Activated CD4-positive, alpha-beta T cell treated with anti-CD3 and anti-CD28 coated beads, Interleukin-2, amount 10 ng/mL, durations not matched to agents 24 days and 14 days (primary cell): ENCODE measurements at regions of chr5 and their contacts with region 1.

Region 1: GRCh38 chr5:91311697-91312501 is 71.2 kb downstream of the ARRDC3 start:
- DNase-seq: peak; percentile 89
- H3K4me3 Mint-ChIP-seq: peak overlapping the region; percentile 59
- H3K27ac Mint-ChIP-seq: peak overlapping the region; percentile 80
- H3K4me1 Mint-ChIP-seq: peaks cover 37% of the 10 kb centered on the region
- H3K27me3 Mint-ChIP-seq: no peaks in the 10 kb centered on the region

Region 2: DNA sequence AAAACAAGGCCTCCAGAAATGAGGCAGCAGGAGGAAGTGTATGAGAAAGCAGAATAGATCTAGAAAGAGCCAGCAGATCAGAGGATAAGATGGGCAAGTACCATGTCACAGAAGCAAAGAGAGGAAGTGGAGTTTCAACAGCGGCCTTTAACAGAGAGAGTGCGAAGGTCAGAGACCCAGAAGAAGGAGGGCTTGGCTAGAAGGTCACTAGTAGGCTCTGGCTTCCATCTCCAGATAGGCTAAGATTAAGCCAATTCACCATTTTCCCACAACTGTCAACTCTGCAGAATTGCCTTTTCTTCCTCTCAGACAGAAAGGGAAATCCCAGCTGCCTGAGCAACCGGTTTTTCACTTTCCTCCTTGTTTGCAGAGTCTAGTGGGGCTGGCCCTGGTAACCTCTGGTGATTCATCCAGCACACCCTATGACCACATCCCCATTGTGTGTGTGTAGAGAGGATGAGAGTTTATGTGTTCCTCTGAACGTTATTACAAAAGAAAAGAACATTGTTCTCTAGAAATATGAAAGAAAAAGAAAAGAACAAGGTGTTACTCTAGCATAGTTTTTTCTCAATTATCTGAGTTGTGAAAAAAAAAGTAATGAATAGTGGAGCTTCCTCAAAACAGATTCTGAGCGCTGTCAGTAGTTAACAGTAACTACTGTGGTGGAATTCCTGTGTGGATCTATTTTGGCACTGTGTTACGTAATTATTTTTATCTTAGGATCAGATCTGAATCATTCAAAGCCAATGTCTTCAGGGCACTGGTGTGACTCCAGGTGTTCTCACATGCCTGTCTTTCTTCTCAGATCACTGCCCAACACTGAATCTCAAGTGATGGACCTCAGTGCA is 149.1 kb before region 1 on chr5:
- intact Hi-C with region 1: loop called (anchors 2 kb)
- DNase-seq: peak; percentile 90
- H3K4me3 Mint-ChIP-seq: peak overlapping the region; percentile 63
- H3K27ac Mint-ChIP-seq: peak overlapping the region; percentile 88
- H3K4me1 Mint-ChIP-seq: peaks cover 25% of the 10 kb centered on the region
- H3K27me3 Mint-ChIP-seq: peaks cover 3% of the 10 kb centered on the region

Region 3: GRCh38 chr5:91225848-91226686 is 85.8 kb before region 1 on chr5:
- intact Hi-C with region 1: loop called (anchors 5 kb)
- DNase-seq: peak; percentile 87
- H3K4me3 Mint-ChIP-seq: no peak overlapping the region
- H3K27ac Mint-ChIP-seq: no peak overlapping the region
- H3K4me1 Mint-ChIP-seq: peaks cover 3% of the 10 kb centered on the region
- H3K27me3 Mint-ChIP-seq: peaks cover 26% of the 10 kb centered on the region

Region 4: DNA sequence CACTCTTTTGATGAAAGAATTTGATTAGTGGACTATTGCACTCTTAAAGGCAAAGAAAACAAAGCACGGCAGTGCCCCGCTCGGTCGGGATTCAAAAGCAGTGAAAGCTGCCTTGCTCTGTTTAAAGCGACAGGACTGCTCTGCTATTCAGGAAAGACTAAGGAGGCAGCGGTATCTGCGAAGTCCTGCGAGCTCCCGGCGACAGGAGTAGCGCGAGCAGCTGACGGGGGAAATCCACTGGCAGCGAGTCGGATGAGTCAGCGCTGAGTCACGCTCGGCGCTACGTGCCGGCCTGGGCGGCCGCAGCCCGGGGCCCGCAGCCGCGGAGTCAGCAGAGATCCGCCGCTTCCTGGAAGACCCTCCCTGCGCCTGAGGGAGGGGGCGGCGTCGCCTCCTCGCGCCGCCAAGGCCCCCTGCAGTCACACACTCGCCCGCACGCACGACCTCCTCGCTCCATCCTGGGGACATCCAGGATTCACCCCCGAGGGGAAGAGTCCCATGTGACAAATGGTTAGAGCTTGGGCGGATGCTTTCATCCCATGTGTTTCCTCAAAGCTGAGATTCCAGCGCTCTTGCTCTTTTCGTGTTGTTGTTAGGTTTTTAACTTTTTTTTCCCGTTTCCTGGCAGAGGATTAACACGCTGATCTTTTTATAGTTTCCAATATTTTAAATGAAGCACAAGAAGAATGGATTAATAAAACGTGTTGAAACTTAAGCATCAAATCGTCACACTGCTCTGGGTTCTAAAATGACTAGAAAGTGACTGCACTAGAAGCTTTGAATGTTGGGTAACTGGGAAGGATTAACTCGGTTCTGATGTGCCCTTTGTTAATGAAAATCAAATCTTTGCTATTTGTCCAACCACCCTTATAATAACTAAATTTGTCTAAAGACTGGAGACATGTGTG is 31.3 kb before region 1 on chr5:
- intact Hi-C with region 1: loop called (anchors 1 kb)
- DNase-seq: peak; percentile 95
- H3K4me3 Mint-ChIP-seq: peak overlapping the region; percentile 85
- H3K27ac Mint-ChIP-seq: peak overlapping the region; percentile 92
- H3K4me1 Mint-ChIP-seq: peaks cover 28% of the 10 kb centered on the region
- H3K27me3 Mint-ChIP-seq: peaks cover 4% of the 10 kb centered on the region

Region 5: DNA sequence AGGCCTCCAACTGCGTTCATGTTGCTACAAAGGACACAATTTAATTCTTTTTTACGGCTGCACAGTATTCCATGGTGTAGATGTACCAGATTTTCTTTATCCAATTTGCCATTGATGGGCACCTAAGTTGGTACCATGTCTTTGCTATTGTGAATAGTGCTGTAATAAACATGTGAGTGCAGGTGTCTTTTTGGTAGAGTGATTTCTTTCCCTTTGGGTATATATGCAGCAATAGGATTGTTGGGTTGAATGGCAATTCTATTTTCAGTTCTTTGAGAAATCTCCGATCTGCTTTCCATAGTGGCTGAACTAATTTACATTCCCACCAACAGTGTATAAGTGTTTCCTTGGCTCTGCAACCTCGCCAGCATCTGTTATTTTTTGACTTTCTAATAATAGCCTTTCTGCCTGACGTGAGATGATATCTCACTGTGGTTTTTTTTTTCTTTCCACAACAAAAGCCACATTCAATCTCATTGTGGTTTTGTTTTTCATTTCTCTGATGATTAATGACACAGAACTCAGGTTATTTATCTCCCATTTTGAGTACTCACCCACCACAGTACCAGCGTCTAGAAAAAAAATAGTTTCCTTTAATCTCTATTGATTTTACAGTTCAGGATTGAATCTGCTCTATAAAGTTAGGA is 49.3 kb after region 1 on chr5:
- intact Hi-C with region 1: loop called (anchors 1 kb)
- DNase-seq: no peak
- H3K4me3 Mint-ChIP-seq: no peak overlapping the region
- H3K27ac Mint-ChIP-seq: peak overlapping the region; percentile 74
- H3K4me1 Mint-ChIP-seq: peaks cover 9% of the 10 kb centered on the region
- H3K27me3 Mint-ChIP-seq: peaks cover 21% of the 10 kb centered on the region

Region 6: GRCh38 chr5:91521334-91521733 is 209.4 kb after region 1 on chr5:
- intact Hi-C with region 1: no loop called
- DNase-seq: no peak
- H3K4me3 Mint-ChIP-seq: no peak overlapping the region
- H3K27ac Mint-ChIP-seq: no peak overlapping the region
- H3K4me1 Mint-ChIP-seq: no peaks in the 10 kb centered on the region
- H3K27me3 Mint-ChIP-seq: peaks cover 4% of the 10 kb centered on the region